ENCODE measurements at regions of chr20 and their contacts with region 1.

Region 1: GRCh38 chr20:56468316-56469082 is at the start of gene RTF2:
- DNase-seq: peak; percentile 98
- H3K4me3 Mint-ChIP-seq: peak within 1 kb of the TSS; percentile 100
- H3K27ac Mint-ChIP-seq: peak within 1 kb of the TSS; percentile 99
- H3K4me1 Mint-ChIP-seq: peaks cover 56% of the 10 kb centered on the region
- H3K27me3 Mint-ChIP-seq: no peaks in the 10 kb centered on the region
- total RNA-seq, gene RTF2: 106 and 113 TPM in 2 replicates

Region 2: GRCh38 chr20:56358596-56359211 is 109.8 kb before region 1 on chr20 and contains the start of gene FAM210B:
- intact Hi-C with region 1: loop called (anchors 1 kb)
- DNase-seq: peak; percentile 76
- H3K4me3 Mint-ChIP-seq: peak within 1 kb of the TSS; percentile 85
- H3K27ac Mint-ChIP-seq: peak within 1 kb of the TSS; percentile 48
- H3K4me1 Mint-ChIP-seq: peaks cover 7% of the 10 kb centered on the region
- H3K27me3 Mint-ChIP-seq: peaks cover 7% of the 10 kb centered on the region
- total RNA-seq, gene FAM210B: 6.2 and 6.9 TPM in 2 replicates

Region 3: GRCh38 chr20:56392282-56393137 is 76.0 kb before region 1 on chr20 and contains the start of gene CSTF1:
- intact Hi-C with region 1: loop called (anchors 1 kb)
- DNase-seq: peak; percentile 99
- H3K4me3 Mint-ChIP-seq: no peak within 1 kb of the TSS
- H3K27ac Mint-ChIP-seq: no peak within 1 kb of the TSS
- H3K4me1 Mint-ChIP-seq: peaks cover 49% of the 10 kb centered on the region
- H3K27me3 Mint-ChIP-seq: no peaks in the 10 kb centered on the region
- total RNA-seq, gene CSTF1: 55.2 and 60.9 TPM in 2 replicates

Region 4: GRCh38 chr20:56400090-56400542 is 68.4 kb before region 1 on chr20:
- intact Hi-C with region 1: loop called (anchors 1 kb)
- DNase-seq: peak; percentile 47
- H3K4me3 Mint-ChIP-seq: no peak overlapping the region
- H3K27ac Mint-ChIP-seq: peak overlapping the region; percentile 24
- H3K4me1 Mint-ChIP-seq: peaks cover 28% of the 10 kb centered on the region
- H3K27me3 Mint-ChIP-seq: no peaks in the 10 kb centered on the region

Region 5: GRCh38 chr20:56414842-56415765 is 53.4 kb before region 1 on chr20:
- intact Hi-C with region 1: loop called (anchors 1 kb)
- DNase-seq: no peak
- H3K4me3 Mint-ChIP-seq: peak overlapping the region; percentile 53
- H3K27ac Mint-ChIP-seq: peak overlapping the region; percentile 92
- H3K4me1 Mint-ChIP-seq: peaks cover 69% of the 10 kb centered on the region
- H3K27me3 Mint-ChIP-seq: no peaks in the 10 kb centered on the region

Region 6: DNA sequence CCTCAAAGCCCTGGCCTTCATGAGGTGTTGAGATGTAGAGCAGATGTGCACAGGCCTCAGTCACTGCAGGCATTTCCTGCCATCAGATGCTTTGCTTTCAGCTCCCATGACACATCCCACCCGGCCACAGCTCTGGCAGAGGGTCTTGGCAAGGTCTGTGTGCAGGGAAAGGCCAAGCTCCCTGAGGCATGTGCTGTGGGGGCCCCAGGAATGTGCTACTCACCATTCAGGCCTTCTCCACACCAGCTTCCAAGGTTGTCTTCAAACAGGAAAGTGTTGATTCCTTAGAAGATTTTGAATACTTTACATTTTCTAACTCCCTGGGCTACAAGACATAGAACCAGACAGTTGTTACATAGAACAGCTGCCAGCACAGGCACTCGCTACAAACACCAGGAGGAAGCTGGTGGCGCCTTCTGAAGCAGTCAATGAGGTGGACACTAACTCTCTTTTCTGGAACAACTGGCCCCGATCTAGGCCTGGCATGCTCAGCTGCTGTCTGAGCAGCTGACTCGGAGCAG is 28.7 kb before region 1 on chr20:
- intact Hi-C with region 1: loop called (anchors 1 kb)
- DNase-seq: no peak
- H3K4me3 Mint-ChIP-seq: peak overlapping the region; percentile 64
- H3K27ac Mint-ChIP-seq: peak overlapping the region; percentile 97
- H3K4me1 Mint-ChIP-seq: peaks cover 71% of the 10 kb centered on the region
- H3K27me3 Mint-ChIP-seq: peaks cover 3% of the 10 kb centered on the region

Region 7: GRCh38 chr20:57266291-57267157 is 798.0 kb after region 1 on chr20 and contains the start of gene BMP7:
- intact Hi-C with region 1: no loop called
- DNase-seq: no peak
- H3K4me3 Mint-ChIP-seq: no peak within 1 kb of the TSS
- H3K27ac Mint-ChIP-seq: no peak within 1 kb of the TSS
- H3K4me1 Mint-ChIP-seq: peaks cover 5% of the 10 kb centered on the region
- H3K27me3 Mint-ChIP-seq: peaks cover 74% of the 10 kb centered on the region
- total RNA-seq, gene BMP7: 0.12 and 0.21 TPM in 2 replicates

Measured in activated T-helper 1 cell treated with anti-CD3 and anti-CD28 coated beads, Interleukin-12 subunit alpha, Interleukin-12 subunit beta, Interleukin-2, Interleukin-4 antibody, amounts not matched to agents 30 ng/mL and 10 ng/mL and 1 ng/mL, durations not matched to agents 14 hours and 24 hours and 36 hours (primary cell).